ENCODE measurements at regions of chr12 and their contacts with region 1.

Region 1: DNA sequence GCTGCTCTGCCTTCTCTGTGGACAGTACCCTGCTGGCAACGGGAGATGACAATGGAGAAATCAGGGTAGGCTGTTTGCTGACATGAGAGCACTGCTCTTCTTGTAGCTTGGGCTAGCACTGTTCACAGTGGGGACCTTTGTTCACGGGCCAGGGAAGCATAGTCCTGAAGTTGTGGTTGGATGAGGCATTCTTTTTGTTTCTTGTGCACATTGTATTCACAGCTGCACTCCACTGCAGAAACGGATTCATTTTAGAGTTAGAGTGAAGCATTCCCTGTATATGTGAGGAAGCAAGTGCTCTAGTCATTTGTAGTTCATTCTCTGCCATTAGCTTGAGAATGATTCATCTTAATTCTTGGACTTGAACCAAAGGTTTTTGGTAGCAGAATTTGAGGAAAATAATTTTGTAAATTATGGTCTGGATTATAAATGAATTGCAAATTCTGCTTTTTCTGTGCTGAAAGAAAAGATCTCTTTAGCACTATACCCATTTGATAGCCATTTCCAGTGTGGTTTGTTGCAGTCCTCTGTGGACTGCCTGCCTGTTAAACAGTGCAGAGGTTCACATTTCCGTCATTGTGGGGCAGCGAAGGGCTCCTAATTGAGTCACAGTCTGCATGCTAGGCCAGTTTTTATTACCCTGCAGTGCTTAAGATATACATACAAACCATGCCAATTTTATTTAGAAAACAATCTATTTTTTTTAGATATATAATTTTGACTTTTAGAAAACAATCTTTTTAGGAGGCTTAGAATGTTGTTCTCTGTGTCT is 80.6 kb downstream of the APAF1 start:
- DNase-seq: no peak
- H3K4me3 ChIP-seq: no peak overlapping the region
- H3K27ac ChIP-seq: no peak overlapping the region
- H3K4me1 ChIP-seq: no peaks in the 10 kb centered on the region
- H3K27me3 ChIP-seq: no peaks in the 10 kb centered on the region
- CTCF ChIP-seq: no peak
- POLR2A ChIP-seq: no peak

Region 2: GRCh38 chr12:98424726-98425401 is 300.8 kb before region 1 on chr12:
- intact Hi-C with region 1: loop called (anchors 5 kb)
- DNase-seq: peak in 1 of 2 donors; percentile 49
- H3K4me3 ChIP-seq: no peak overlapping the region
- H3K27ac ChIP-seq: no peak overlapping the region
- H3K4me1 ChIP-seq: no peaks in the 10 kb centered on the region
- H3K27me3 ChIP-seq: no peaks in the 10 kb centered on the region
- CTCF ChIP-seq: peak; percentile 16 to 68 (median 65)
- POLR2A ChIP-seq: no peak

Region 3: GRCh38 chr12:98660521-98660920 is 65.1 kb before region 1 on chr12:
- intact Hi-C with region 1: no loop called
- DNase-seq: no peak
- H3K4me3 ChIP-seq: no peak overlapping the region
- H3K27ac ChIP-seq: no peak overlapping the region
- H3K4me1 ChIP-seq: no peaks in the 10 kb centered on the region
- H3K27me3 ChIP-seq: no peaks in the 10 kb centered on the region
- CTCF ChIP-seq: no peak
- POLR2A ChIP-seq: no peak

Region 4: DNA sequence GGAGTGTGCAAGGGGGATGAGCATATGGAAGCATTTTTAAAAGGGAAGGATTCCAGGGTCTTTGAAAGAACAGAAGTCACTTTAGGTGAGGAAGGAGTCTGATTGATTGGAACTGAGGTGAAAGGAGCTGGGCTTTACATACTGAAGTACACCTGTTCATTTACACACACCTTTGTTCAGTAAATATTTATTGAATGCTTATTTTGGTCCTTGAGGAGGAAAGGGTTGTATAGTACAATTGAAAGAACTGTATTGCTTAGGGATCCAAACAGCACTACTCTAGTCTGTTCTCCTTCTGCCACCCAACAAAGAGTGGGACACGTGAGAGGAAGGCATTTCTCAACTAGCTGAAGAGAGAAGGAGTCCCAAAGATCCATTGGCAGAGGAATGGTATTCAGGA is 16.6 kb before region 1 on chr12:
- intact Hi-C with region 1: no loop called
- DNase-seq: no peak
- H3K4me3 ChIP-seq: no peak overlapping the region
- H3K27ac ChIP-seq: no peak overlapping the region
- H3K4me1 ChIP-seq: no peaks in the 10 kb centered on the region
- H3K27me3 ChIP-seq: no peaks in the 10 kb centered on the region
- CTCF ChIP-seq: no peak
- POLR2A ChIP-seq: no peak

Region 5: GRCh38 chr12:98769068-98769467 is 43.4 kb after region 1 on chr12:
- intact Hi-C with region 1: no loop called
- DNase-seq: no peak
- H3K4me3 ChIP-seq: no peak overlapping the region
- H3K27ac ChIP-seq: no peak overlapping the region
- H3K4me1 ChIP-seq: no peaks in the 10 kb centered on the region
- H3K27me3 ChIP-seq: no peaks in the 10 kb centered on the region
- CTCF ChIP-seq: no peak
- POLR2A ChIP-seq: no peak

Measured in breast epithelium (tissue), 4 donors.